Activated T-helper 2 cell treated with anti-CD3 and anti-CD28 coated beads, Interferon-gamma antibody, Interleukin-2, Interleukin-4, amounts not matched to agents 10 μg/mL and 5 μg/mL and 100 μg/mL, durations not matched to agents 14 hours and 24 hours and 36 hours (primary cell): ENCODE measurements at regions of chr20 and their contacts with region 1.

Region 1: GRCh38 chr20:9616833-9617489 is 102.6 kb downstream of the LAMP5 start:
- DNase-seq: peak; percentile 14
- H3K4me3 Mint-ChIP-seq: no peak overlapping the region
- H3K27ac Mint-ChIP-seq: no peak overlapping the region
- H3K4me1 Mint-ChIP-seq: no peaks in the 10 kb centered on the region
- H3K27me3 Mint-ChIP-seq: no peaks in the 10 kb centered on the region

Region 2: DNA sequence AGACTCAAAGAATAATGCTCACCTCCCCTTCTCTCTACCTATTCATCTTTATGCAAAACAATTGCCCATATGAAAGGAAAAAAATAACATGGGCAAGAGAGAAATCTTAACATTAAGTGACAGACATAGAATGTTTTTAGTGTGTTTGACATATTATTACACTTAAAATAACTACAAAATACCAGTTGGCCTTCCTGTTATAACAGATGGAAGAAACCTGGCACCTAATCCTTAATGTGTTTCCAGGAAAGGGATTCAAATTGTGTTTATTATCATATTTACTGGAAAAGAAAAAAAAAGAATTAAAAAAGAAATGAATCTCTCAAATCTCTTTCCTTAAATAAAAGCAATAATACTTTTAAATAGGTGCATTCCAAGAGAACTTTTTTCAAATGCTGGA is 56.0 kb after region 1 on chr20:
- intact Hi-C with region 1: no loop called
- DNase-seq: no peak
- H3K4me3 Mint-ChIP-seq: no peak overlapping the region
- H3K27ac Mint-ChIP-seq: no peak overlapping the region
- H3K4me1 Mint-ChIP-seq: no peaks in the 10 kb centered on the region
- H3K27me3 Mint-ChIP-seq: no peaks in the 10 kb centered on the region

Region 3: DNA sequence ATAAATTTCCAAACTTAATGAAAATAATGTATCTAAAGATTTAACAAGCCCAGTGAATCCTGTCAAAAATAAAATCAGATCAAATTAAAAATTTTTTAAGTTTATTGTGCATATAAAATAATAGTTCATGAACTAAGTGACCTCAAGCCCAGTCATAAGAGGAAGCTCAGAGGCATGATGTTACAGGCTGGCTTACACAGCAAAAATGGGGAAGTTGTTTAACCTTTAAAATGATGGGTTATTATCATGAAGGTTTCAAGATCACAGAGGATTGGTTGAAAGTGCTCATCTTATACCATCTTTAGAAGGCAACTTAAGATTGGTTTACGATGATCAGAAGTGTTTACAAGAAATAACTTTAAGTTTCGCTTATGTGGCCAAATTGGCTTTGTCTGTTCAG is 119.4 kb after region 1 on chr20:
- intact Hi-C with region 1: no loop called
- DNase-seq: no peak
- H3K4me3 Mint-ChIP-seq: no peak overlapping the region
- H3K27ac Mint-ChIP-seq: no peak overlapping the region
- H3K4me1 Mint-ChIP-seq: no peaks in the 10 kb centered on the region
- H3K27me3 Mint-ChIP-seq: no peaks in the 10 kb centered on the region

Region 4: GRCh38 chr20:9755301-9755700 is 138.3 kb after region 1 on chr20:
- intact Hi-C with region 1: no loop called
- DNase-seq: no peak
- H3K4me3 Mint-ChIP-seq: no peak overlapping the region
- H3K27ac Mint-ChIP-seq: no peak overlapping the region
- H3K4me1 Mint-ChIP-seq: no peaks in the 10 kb centered on the region
- H3K27me3 Mint-ChIP-seq: no peaks in the 10 kb centered on the region

Region 5: GRCh38 chr20:9912858-9913434 is 296.0 kb after region 1 on chr20:
- intact Hi-C with region 1: loop called (anchors 1 kb)
- DNase-seq: no peak
- H3K4me3 Mint-ChIP-seq: no peak overlapping the region
- H3K27ac Mint-ChIP-seq: no peak overlapping the region
- H3K4me1 Mint-ChIP-seq: no peaks in the 10 kb centered on the region
- H3K27me3 Mint-ChIP-seq: peaks cover 2% of the 10 kb centered on the region

Region 6: GRCh38 chr20:9966966-9967365 is 350.0 kb after region 1 on chr20:
- intact Hi-C with region 1: loop called (anchors 5 kb)
- DNase-seq: no peak
- H3K4me3 Mint-ChIP-seq: no peak overlapping the region
- H3K27ac Mint-ChIP-seq: no peak overlapping the region
- H3K4me1 Mint-ChIP-seq: no peaks in the 10 kb centered on the region
- H3K27me3 Mint-ChIP-seq: peaks cover 2% of the 10 kb centered on the region

Region 7: GRCh38 chr20:10427060-10427692 is 810.2 kb after region 1 on chr20:
- intact Hi-C with region 1: loop called (anchors 10 kb)
- DNase-seq: no peak
- H3K4me3 Mint-ChIP-seq: no peak overlapping the region
- H3K27ac Mint-ChIP-seq: no peak overlapping the region
- H3K4me1 Mint-ChIP-seq: peaks cover 42% of the 10 kb centered on the region
- H3K27me3 Mint-ChIP-seq: no peaks in the 10 kb centered on the region